GM13976 (cell line): ENCODE measurements at regions of chr6 and their contacts with region 1.

Region 1: GRCh38 chr6:153023977-153024708 is 21.6 kb upstream of the MTRF1L start:
- DNase-seq: peak; percentile 56
- CTCF ChIP-seq: peak; percentile 75

Region 2: GRCh38 chr6:152863618-152864326 is 160.4 kb before region 1 on chr6:
- in situ Hi-C with region 1: loop called (anchors 10 kb)
- DNase-seq: peak; percentile 32
- CTCF ChIP-seq: peak; percentile 69

Region 3: GRCh38 chr6:152952866-152953509 is 71.2 kb before region 1 on chr6:
- in situ Hi-C with region 1: loop called (anchors 10 kb)
- DNase-seq: peak; percentile 43
- CTCF ChIP-seq: peak; percentile 42

Region 4: GRCh38 chr6:153401754-153402153 is 377.6 kb after region 1 on chr6:
- in situ Hi-C with region 1: no loop called
- DNase-seq: no peak
- CTCF ChIP-seq: no peak